Mammary epithelial cell (primary cell): ENCODE measurements at regions of chr5 and their contacts with region 1.

Region 1: DNA sequence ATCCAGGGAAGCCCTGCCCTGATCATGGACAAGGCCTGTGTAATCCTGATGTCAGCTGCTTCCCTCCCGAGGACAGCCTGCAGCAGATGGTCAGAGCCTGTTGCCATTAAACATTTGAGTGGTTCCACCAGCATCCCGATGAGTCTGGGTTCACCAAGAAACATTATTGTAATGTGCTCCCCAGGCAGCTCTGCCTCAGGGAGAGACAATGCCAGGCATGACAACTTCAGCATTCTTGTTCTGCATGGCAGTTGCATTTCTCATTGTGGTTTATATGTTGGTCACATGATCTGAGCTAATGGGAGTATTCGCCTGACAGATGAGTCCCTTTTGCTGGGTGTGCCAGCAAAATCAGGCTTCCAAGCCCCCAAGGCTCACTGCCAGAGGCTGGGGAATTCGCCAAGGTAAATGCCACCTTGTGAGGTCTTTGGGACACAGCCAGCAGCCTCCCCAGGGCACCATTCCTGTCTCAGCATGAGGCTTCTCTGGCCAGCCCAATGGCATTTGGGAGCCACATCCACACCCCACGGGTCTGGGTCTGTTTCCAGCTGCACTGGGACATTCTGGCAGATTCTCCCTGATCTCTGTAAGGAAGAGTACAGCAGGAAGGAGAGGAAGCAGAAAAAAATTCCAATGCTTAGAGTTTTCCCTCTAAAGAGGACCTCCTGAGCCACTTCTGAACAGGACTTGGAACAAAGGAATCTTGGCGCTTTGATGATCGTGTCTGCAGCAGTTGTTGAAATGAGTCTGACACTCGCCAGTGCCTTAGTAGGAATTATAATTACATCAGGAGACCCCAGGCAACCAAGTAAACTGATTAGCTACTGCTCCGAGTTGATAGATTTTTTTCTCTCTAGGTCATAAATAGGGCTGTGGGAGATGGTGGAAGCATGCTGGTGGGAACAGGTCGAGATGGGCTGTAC is 18.7 kb downstream of the KCNIP1 start:
- DNase-seq: peak; percentile 76
- H3K4me3 ChIP-seq: no peak overlapping the region
- H3K27ac ChIP-seq: no peak overlapping the region
- H3K4me1 ChIP-seq: peaks cover 15% of the 10 kb centered on the region
- H3K27me3 ChIP-seq: no peaks in the 10 kb centered on the region
- CTCF ChIP-seq: no peak

Region 2: DNA sequence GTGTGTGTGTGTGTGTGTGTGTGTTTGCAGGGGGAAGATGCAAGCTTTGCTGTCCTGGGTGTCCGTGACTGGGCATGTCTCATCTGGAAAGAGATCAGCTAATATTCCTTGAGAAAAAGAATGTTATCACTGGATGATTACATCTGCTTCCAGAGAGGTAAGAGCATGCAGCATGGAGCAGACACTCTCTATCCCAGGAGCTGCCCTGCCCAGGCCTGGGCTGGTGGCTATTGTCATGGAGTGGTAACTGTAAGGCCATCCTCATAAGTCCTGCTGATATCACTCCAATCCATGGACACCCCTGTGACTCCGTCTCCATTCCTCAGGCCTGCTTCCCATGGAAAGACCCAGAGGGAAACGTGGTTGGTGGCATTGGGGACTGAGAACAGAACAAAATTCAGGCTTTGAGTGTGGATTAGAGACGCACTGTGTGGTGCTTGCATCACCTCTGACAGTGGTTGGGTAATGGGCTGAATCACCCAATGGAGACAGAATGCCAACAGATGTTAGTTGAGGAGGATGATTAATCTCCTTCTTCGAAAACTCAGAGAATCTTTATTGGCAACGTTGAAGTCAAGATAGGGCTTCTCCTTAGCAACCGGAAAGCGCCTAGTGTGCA is 70.6 kb before region 1 on chr5:
- CTCF ChIA-PET with region 1: no interaction called
- dilution Hi-C with region 1: no loop called
- in situ Hi-C with region 1: no loop called
- intact Hi-C with region 1: loop called (anchors 10 kb)
- DNase-seq: peak; percentile 64
- H3K4me3 ChIP-seq: no peak overlapping the region
- H3K27ac ChIP-seq: no peak overlapping the region
- H3K4me1 ChIP-seq: no peaks in the 10 kb centered on the region
- H3K27me3 ChIP-seq: no peaks in the 10 kb centered on the region
- CTCF ChIP-seq: no peak

Region 3: DNA sequence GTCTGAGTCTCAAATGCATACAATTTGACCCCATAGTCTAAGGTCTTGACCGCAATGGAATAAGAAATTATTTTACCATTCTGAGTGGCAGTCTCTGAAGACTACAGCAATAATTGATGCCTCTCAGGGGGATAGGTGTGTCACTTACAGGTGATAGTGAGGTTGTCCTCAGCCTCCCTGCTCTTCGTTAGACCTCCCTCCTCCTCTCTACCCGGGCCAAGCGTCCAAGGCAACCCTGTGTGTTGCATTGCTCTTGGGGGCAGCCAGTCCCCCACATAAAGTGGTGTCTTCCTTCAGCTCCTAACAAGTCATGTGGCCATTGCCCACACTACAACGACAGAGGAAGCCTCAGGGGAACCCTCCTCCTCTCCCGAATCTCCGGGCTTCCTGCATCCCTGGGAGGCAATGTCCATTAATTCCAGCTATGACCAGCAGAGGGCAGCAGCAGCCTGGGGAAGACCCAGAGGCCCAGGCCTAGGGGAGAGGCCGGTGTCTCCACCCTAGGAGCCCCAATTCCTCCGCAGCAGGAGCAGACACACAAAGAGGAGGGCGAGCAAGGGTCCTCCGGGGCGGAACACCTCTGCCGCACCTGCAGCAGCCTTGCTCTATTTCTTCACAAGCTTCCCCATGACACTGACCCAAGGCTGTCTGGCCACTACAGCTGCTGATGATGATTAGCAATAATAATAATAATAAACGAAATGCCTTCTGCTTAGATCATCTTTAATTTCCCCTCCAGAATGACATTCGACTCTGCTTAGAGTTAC is 116.2 kb after region 1 on chr5:
- CTCF ChIA-PET with region 1: no interaction called
- dilution Hi-C with region 1: no loop called
- in situ Hi-C with region 1: no loop called
- intact Hi-C with region 1: no loop called
- DNase-seq: peak; percentile 35
- H3K4me3 ChIP-seq: no peak overlapping the region
- H3K27ac ChIP-seq: no peak overlapping the region
- H3K4me1 ChIP-seq: peaks cover 7% of the 10 kb centered on the region
- H3K27me3 ChIP-seq: no peaks in the 10 kb centered on the region
- CTCF ChIP-seq: peak; percentile 70 to 92